ENCODE measurements at regions of chrX and their contacts with region 1.

Region 1: GRCh38 chrX:41275661-41276609 is 58.0 kb upstream of the DDX3X start:
- DNase-seq: peak; percentile 49 to 72 (median 54)
- ATAC-seq: peak; percentile 97
- H3K4me3 ChIP-seq: peak overlapping the region; percentile 37
- H3K27ac ChIP-seq: no peak overlapping the region
- H3K4me1 ChIP-seq: peaks cover 0 to 10% of the 10 kb centered on the region in 2 experiments; a peak in 2 of 5 replicates
- H3K27me3 ChIP-seq: peaks cover 2 to 15% of the 10 kb centered on the region in 2 experiments; a peak in 3 of 5 replicates
- CTCF ChIP-seq: peak; percentile 57 to 61 (median 57)
- EP300 ChIP-seq: no peak
- POLR2A ChIP-seq: no peak
- RAD21 ChIP-seq: peak; percentile 60 to 78

Region 2: GRCh38 chrX:41333744-41334259 is 57.9 kb after region 1 on chrX and contains the start of gene DDX3X:
- CTCF ChIA-PET with region 1: no interaction called
- POLR2A ChIA-PET with region 1: interaction called, 3 read pairs
- in situ Hi-C with region 1: no loop called
- intact Hi-C with region 1: loop called (anchors 2 kb)
- DNase-seq: peak in 3 of 4 experiments; percentile 61 to 89 (median 84)
- ATAC-seq: peak; percentile 76
- H3K4me3 ChIP-seq: peak within 1 kb of the TSS; percentile 97
- H3K27ac ChIP-seq: peak within 1 kb of the TSS; percentile 98
- H3K4me1 ChIP-seq: peaks cover 8 to 18% of the 10 kb centered on the region in 2 experiments; a peak in 4 of 5 replicates
- H3K27me3 ChIP-seq: no peaks in the 10 kb centered on the region; a peak in 1 of 5 replicates
- CTCF ChIP-seq: peak in 2 of 3 experiments; percentile 36 to 37; a peak in 4 of 6 replicates
- EP300 ChIP-seq: no peak
- POLR2A ChIP-seq: peak; percentile 99
- RAD21 ChIP-seq: no peak
- polyA plus RNA-seq, gene DDX3X: 51.3 to 119 TPM

Region 3: DNA sequence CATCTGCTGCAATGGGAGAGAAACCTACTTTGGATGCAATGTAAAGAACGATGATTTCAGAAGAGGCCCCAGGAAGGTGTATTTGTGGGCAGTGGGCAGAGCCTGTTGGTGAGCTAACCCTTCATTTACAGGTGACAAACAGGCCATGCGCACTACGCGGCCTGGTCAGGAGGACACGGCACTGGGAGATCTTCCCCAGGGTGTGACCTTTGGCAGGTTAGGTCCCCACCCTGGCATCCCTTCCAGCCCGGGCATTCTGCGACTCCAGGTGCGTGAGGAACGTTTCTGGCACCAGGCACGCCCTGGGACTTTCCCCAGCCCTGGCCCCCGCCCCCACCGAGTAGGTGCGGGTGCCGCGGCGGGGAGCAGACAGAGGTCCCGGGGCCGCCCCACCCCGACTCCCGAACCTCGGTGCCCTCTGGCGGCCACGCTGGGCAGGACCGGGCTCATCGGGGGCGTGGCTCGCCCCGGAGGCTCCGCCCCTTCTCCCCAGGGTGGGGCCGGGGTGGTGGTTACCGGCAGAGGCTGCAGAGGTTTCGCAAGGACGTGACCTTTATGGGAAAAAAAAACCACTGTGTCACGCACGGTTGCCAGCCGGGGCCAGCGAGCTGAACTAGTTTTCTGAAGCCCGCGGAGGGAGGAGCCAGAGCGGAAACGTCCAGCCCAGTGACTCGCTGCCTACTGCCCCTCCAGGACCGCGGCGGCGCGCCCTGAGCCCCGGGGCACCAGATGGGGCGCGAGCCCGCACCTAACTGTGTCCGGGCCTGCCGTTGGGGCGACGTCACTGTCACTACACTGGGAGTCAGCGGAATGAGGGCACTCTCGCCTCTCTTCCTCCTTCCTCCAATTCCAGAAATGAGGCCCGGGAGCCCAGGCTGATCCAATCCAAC is 166.2 kb after region 1 on chrX:
- CTCF ChIA-PET with region 1: no interaction called
- POLR2A ChIA-PET with region 1: no interaction called
- in situ Hi-C with region 1: no loop called
- intact Hi-C with region 1: loop called (anchors 5 kb)
- DNase-seq: peak; percentile 88 to 97 (median 95)
- ATAC-seq: peak; percentile 98
- H3K4me3 ChIP-seq: peak overlapping the region; percentile 36
- H3K27ac ChIP-seq: peak overlapping the region; percentile 73
- H3K4me1 ChIP-seq: peaks cover 10 to 11% of the 10 kb centered on the region in 2 experiments; a peak in 4 of 5 replicates
- H3K27me3 ChIP-seq: no peaks in the 10 kb centered on the region
- CTCF ChIP-seq: peak; percentile 69 to 78 (median 71)
- EP300 ChIP-seq: peak; percentile 51
- POLR2A ChIP-seq: peak; percentile 56; the same call in 1 of the 2 replicates
- RAD21 ChIP-seq: peak; percentile 72 to 77

Region 4: GRCh38 chrX:41457613-41458192 is 181.8 kb after region 1 on chrX:
- CTCF ChIA-PET with region 1: no interaction called
- POLR2A ChIA-PET with region 1: no interaction called
- in situ Hi-C with region 1: no loop called
- intact Hi-C with region 1: loop called (anchors 5 kb)
- DNase-seq: peak in 1 of 4 experiments; percentile 12
- ATAC-seq: peak; percentile 64; the same call in 2 of the 3 replicates
- H3K4me3 ChIP-seq: no peak overlapping the region
- H3K27ac ChIP-seq: no peak overlapping the region
- H3K4me1 ChIP-seq: no peaks in the 10 kb centered on the region
- H3K27me3 ChIP-seq: no peaks in the 10 kb centered on the region
- CTCF ChIP-seq: peak in 2 of 3 experiments; percentile 43; a peak in 3 of 6 replicates
- EP300 ChIP-seq: no peak
- POLR2A ChIP-seq: no peak
- RAD21 ChIP-seq: peak in 1 of 2 experiments; percentile 54; a peak in 2 of 4 replicates

Region 5: DNA sequence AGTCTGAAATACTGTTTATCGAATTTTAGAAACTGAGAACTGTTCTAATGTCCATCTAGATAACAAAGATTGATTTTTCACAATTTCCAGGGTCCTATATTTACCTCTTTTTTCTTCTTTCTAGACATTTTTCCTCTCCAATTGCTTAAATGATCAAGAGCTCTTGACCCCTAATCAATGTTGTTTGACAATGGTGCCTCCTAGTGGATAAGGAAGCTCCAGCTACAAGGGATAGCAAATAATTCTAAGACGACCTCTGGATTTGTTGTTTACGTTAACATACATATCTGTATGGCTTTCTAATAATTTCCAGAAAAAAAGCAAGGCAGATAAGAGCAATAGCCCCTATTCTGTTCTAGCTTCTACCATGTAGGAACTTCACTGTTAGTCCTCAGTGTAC is 483.9 kb after region 1 on chrX:
- CTCF ChIA-PET with region 1: no interaction called
- POLR2A ChIA-PET with region 1: no interaction called
- in situ Hi-C with region 1: loop called (anchors 10 kb)
- intact Hi-C with region 1: loop called (anchors 5 kb)
- DNase-seq: peak; percentile 6 to 53 (median 14)
- ATAC-seq: peak; percentile 61; the same call in 2 of the 3 replicates
- H3K4me3 ChIP-seq: no peak overlapping the region
- H3K27ac ChIP-seq: no peak overlapping the region
- H3K4me1 ChIP-seq: no peaks in the 10 kb centered on the region
- H3K27me3 ChIP-seq: no peaks in the 10 kb centered on the region
- CTCF ChIP-seq: peak; percentile 42 to 68 (median 53); a peak in 5 of 6 replicates
- EP300 ChIP-seq: no peak
- POLR2A ChIP-seq: no peak
- RAD21 ChIP-seq: peak; percentile 76 to 81